ENCODE measurements at regions of chr10 and their contacts with region 1.

Region 1: DNA sequence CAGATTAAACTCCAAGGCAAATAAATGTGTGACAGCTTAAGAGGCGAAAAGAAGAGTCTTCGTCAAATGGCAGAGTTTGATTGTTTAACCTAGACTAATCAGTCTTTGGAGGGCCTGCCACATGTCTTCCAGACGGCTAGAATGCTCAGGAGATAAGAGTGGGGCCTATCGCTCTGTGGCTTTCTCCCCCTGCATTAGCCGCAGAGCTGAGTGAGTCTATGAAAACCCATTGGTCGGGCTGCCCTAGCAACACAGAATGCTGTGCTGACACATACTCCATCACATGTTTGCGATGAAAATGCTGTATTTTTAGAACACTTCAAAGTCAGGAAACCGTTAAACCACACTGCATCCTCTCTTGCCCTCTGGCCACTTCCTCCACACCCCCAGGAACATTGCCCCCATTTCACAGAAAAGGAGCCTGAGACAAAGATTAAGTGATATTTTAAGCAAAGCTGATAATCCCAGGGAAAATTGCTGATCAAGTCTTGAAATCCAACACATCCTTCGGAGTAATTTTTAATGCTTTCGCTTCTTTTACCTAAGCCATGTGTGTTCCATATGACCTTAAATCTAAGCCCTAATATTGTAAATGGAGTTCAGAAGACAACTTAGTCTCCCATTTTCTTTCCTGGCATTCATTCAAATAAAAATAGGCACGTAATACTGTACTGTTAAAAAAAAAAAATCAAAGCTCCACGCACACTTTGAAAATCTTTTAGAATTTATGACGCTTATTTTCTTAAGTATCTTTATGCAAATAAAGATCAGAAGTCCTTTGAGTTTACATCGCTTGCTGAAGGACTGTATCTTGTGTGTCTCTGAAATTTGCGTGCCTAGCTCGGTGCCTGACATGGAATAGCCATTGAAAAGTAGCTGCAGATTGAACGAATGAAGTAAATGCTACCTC is 161.2 kb downstream of the CELF2 start:
- DNase-seq: peak; percentile 85
- ATAC-seq: peak; percentile 73
- H3K4me3 ChIP-seq: peak overlapping the region in 4 of 5 experiments; percentile 3 to 43 (median 18)
- H3K4me3 Mint-ChIP-seq: peak overlapping the region; percentile 81
- H3K27ac ChIP-seq: peak overlapping the region; percentile 63 to 87
- H3K27ac Mint-ChIP-seq: peak overlapping the region; percentile 94
- H3K4me1 ChIP-seq: peaks cover 96% of the 10 kb centered on the region in 2 donors
- H3K4me1 Mint-ChIP-seq: peaks cover 97% of the 10 kb centered on the region
- H3K27me3 ChIP-seq: no peaks in the 10 kb centered on the region
- H3K27me3 Mint-ChIP-seq: no peaks in the 10 kb centered on the region
- CTCF ChIP-seq: no peak

Region 2: DNA sequence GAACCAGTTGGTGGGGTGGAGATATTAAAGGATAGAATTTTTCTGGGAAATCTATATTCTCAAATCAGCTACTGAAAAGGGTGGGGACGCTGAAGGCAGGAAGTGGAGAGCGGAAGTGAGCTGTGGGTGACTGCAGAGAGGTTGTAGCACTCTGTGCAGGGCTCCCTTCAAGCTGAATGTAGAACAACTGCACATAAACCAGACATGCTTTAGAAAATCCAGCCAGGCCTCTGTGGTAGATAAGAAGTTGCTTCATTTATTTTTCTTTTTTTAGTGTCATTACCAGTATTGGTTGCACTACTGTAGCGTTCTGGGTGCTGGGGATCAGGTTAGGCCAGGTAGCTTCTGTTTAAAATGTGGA is 33.4 kb before region 1 on chr10:
- CTCF ChIA-PET with region 1: interaction called, 8 read pairs
- POLR2A ChIA-PET with region 1: interaction called, 3 read pairs
- intact Hi-C with region 1: loop called (anchors 1 kb)
- DNase-seq: peak; percentile 70
- ATAC-seq: peak; percentile 75
- H3K4me3 ChIP-seq: peak overlapping the region in 4 of 5 experiments; percentile 7 to 33 (median 22)
- H3K4me3 Mint-ChIP-seq: peak overlapping the region; percentile 68
- H3K27ac ChIP-seq: peak overlapping the region; percentile 33 to 76
- H3K27ac Mint-ChIP-seq: peak overlapping the region; percentile 85
- H3K4me1 ChIP-seq: peaks cover 84 to 89% of the 10 kb centered on the region in 2 donors
- H3K4me1 Mint-ChIP-seq: peaks cover 90% of the 10 kb centered on the region
- H3K27me3 ChIP-seq: no peaks in the 10 kb centered on the region
- H3K27me3 Mint-ChIP-seq: no peaks in the 10 kb centered on the region
- CTCF ChIP-seq: no peak

Region 3: DNA sequence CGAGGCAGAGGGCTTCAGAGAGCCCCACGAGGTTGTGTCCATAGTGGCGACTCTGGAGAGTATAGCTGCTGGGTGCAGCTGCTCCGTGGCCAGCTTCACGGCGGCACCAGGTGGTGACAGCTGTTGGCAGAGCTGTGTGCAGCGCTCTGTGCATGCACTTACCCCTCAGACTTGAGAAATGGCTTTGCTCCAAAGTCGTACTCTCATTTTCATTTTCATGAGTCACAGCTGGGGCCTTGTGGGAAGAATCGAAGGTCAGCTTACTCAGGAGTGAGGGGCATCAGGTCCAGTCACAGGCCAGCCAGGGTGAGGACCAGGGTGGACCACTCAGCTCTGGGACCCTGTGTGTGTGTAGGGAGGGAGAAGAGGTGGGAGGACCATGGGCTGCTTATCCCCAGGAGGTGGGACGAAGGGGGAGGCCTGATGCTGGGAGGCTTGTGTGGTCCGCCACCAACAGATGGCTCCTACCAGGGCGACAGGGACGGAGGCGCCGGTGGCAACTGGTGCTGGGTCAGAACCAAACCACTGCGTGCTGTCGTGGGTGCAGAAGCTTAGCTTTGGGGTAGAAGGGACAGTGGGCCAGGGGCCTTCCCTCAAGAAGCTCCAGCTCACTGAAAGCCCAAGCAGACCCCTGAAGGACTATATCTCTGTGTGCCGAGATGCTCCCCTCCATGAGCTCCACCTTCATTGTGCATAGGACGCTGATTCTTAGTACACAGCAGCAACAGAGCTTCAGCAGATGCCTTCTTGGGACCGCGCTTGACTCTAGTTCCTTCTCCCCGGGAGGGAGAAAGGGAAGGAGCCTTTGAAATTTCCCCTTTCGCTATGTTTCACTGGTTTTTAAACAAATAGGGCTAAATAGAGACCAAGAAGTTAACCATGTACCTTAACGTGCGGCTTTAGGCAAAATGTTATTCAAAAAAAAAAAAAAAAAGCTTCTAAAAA is 63.9 kb after region 1 on chr10:
- CTCF ChIA-PET with region 1: interaction called, 6 read pairs
- POLR2A ChIA-PET with region 1: interaction called, 3 read pairs
- intact Hi-C with region 1: loop called (anchors 1 kb)
- DNase-seq: peak; percentile 75
- ATAC-seq: peak; percentile 61
- H3K4me3 ChIP-seq: peak overlapping the region in 4 of 5 experiments; percentile 28 to 58 (median 40)
- H3K4me3 Mint-ChIP-seq: peak overlapping the region; percentile 91
- H3K27ac ChIP-seq: peak overlapping the region; percentile 66 to 80
- H3K27ac Mint-ChIP-seq: peak overlapping the region; percentile 97
- H3K4me1 ChIP-seq: peaks cover 82 to 85% of the 10 kb centered on the region in 2 donors
- H3K4me1 Mint-ChIP-seq: peaks cover 52% of the 10 kb centered on the region
- H3K27me3 ChIP-seq: no peaks in the 10 kb centered on the region
- H3K27me3 Mint-ChIP-seq: no peaks in the 10 kb centered on the region
- CTCF ChIP-seq: no peak

Region 4: GRCh38 chr10:11678074-11678793 is 499.4 kb after region 1 on chr10:
- CTCF ChIA-PET with region 1: no interaction called
- POLR2A ChIA-PET with region 1: no interaction called
- intact Hi-C with region 1: no loop called
- DNase-seq: peak; percentile 78
- ATAC-seq: peak; percentile 83
- H3K4me3 ChIP-seq: peak overlapping the region in 3 of 5 experiments; percentile 3 to 33 (median 30)
- H3K4me3 Mint-ChIP-seq: peak overlapping the region; percentile 85
- H3K27ac ChIP-seq: peak overlapping the region; percentile 25 to 35
- H3K27ac Mint-ChIP-seq: peak overlapping the region; percentile 92
- H3K4me1 ChIP-seq: peaks cover 94 to 97% of the 10 kb centered on the region in 2 donors
- H3K4me1 Mint-ChIP-seq: peaks cover 87% of the 10 kb centered on the region
- H3K27me3 ChIP-seq: no peaks in the 10 kb centered on the region
- H3K27me3 Mint-ChIP-seq: no peaks in the 10 kb centered on the region
- CTCF ChIP-seq: no peak

Measured in B cell (primary cell).